Endothelial cell of umbilical vein (primary cell): ENCODE measurements at regions of chr4 and their contacts with region 1.

Region 1: DNA sequence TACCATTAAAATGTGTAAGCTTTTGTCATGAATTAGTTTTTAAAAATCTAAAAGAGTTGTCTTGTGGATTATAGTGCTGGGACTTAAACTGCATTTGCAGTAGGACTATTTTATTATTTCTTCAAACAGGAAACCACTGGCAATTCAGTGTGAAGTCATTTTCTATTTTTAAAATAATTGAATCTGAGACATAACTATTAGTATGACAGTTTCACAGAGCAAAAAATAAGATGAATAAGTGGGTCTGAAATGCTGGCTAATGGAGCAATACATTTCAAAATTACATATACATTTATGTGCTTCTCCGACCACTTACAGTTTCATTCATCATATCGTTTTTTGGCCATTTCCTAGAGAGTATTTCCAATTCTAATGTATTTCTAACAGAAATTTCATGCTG is 75.3 kb upstream of the RAPGEF2 start:
- DNase-seq: peak; percentile 73
- H3K4me3 ChIP-seq: no peak overlapping the region
- H3K27ac ChIP-seq: peak overlapping the region; percentile 45
- H3K4me1 ChIP-seq: peaks cover 24% of the 10 kb centered on the region
- H3K27me3 ChIP-seq: no peaks in the 10 kb centered on the region
- CTCF ChIP-seq: no peak
- POLR2A ChIP-seq: no peak

Region 2: GRCh38 chr4:159003420-159004253 is 23.9 kb before region 1 on chr4:
- CTCF ChIA-PET with region 1: no interaction called
- POLR2A ChIA-PET with region 1: no interaction called
- dilution Hi-C with region 1: no loop called
- intact Hi-C with region 1: loop called (anchors 2 kb)
- DNase-seq: peak; percentile 81
- H3K4me3 ChIP-seq: peak overlapping the region in 1 of 3 experiments; percentile 49
- H3K27ac ChIP-seq: peak overlapping the region; percentile 94
- H3K4me1 ChIP-seq: peaks cover 21% of the 10 kb centered on the region
- H3K27me3 ChIP-seq: no peaks in the 10 kb centered on the region
- CTCF ChIP-seq: no peak
- POLR2A ChIP-seq: no peak

Region 3: DNA sequence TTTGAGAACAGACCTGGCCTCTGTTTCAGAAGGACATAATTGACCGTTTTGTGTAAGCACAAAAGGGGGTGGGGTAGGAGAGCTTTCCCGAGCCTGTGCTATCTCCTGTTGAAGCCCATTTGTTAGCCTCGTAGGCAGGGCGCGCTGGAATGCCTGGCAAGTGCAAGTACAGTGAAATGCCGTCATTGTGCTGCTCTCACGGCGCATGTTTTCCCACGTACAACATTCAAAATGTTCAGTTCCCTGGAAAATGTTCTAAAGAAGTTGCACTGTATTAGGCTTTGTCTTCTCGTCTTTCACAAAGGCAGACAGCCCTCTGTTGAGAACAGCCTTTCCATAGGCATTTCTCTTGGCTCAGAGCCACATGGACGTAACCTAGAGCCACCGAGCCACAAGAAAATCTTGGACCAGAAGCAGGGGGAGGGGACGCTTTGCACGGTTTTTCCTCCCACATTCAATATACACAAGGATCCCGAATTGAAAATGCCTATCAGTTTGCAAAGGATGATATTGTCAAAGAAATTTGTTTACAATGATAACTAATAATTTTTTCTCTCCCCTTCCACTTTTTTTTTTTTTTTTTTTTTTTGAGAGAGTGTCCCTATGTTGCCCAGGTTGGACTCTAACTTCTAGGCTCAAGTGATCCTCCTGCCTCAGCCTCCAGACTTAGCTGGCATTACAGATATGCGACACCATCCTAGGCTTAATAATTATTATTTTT is 20.8 kb after region 1 on chr4:
- CTCF ChIA-PET with region 1: interaction called, 15 read pairs
- POLR2A ChIA-PET with region 1: no interaction called
- dilution Hi-C with region 1: no loop called
- intact Hi-C with region 1: loop called (anchors 1 kb)
- DNase-seq: peak; percentile 89
- H3K4me3 ChIP-seq: peak overlapping the region; percentile 11 to 68 (median 17)
- H3K27ac ChIP-seq: peak overlapping the region; percentile 74
- H3K4me1 ChIP-seq: peaks cover 13% of the 10 kb centered on the region
- H3K27me3 ChIP-seq: no peaks in the 10 kb centered on the region
- CTCF ChIP-seq: no peak
- POLR2A ChIP-seq: no peak